CD4-positive, alpha-beta T cell (primary cell): ENCODE measurements at regions of chr10 and their contacts with region 1.

Region 1: DNA sequence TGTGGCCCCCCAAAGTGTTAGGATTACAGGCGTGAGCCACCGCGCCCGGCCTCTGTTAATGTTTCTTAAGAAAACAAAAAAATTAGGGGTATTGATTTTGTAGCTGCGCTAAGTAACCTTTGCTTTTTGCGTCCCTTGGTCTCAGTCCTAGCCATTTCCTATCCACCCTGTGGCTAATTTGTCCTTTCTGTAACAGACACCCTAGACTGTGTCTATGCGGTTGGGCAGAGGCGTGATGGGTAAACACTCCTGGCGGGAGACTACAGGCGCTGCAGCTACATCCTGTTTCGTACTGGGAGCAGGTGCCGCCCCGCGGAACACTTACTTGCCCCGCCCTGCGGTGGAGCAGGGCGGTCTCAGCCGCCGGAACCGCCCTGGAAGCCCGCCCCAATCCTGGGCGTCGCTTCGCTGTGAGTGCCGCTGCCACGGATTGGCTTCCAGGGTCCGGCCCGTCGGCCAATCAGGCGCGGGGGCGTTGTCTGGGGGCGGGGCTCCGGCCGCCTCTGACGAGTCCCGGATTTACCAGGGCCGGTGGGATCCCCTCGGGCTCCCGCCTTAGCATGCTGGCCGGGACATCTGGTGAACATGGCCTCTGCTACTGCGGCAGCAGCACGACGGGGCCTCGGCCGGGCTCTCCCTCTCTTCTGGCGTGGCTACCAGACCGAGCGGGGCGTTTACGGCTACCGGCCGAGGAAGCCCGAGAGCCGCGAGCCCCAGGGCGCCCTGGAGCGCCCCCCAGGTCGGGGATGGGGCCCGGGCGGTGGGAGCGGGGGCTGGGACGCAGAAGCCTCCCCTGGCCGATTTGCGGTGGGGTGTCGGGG is at the start of gene DHTKD1:
- DNase-seq: peak; percentile 95 to 99 (median 98)
- ATAC-seq: peak; percentile 98
- H3K4me3 ChIP-seq: peak within 1 kb of the TSS; percentile 85
- H3K4me3 Mint-ChIP-seq: peak within 1 kb of the TSS; percentile 91
- H3K27ac ChIP-seq: peak within 1 kb of the TSS; percentile 73 to 78
- H3K27ac Mint-ChIP-seq: peak within 1 kb of the TSS; percentile 95
- H3K4me1 ChIP-seq: peaks cover 15% of the 10 kb centered on the region
- H3K4me1 Mint-ChIP-seq: peaks cover 16% of the 10 kb centered on the region
- H3K27me3 ChIP-seq: no peaks in the 10 kb centered on the region
- H3K27me3 Mint-ChIP-seq: no peaks in the 10 kb centered on the region
- CTCF ChIP-seq: peak; percentile 27
- total RNA-seq, gene DHTKD1: 5.1 to 5.3 TPM

Region 2: DNA sequence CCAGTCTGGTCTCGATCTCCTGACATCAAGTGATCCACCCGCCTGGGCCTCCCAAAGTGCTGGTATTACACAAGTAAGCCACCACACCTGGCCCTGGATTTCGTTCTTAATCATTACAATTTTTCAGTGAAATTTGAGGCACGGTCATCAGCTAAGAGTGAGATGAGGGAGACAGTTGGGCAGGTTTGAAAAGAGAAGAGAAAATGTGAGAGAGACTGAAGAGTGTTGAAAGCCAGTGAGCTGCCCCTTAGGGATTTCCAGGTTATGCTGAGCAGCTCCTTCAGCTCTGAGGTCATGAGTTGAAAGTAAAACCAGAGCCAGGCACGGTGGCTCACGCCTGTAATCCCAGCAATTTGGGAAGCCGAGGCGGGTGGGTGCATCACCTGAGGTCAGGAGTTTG is 20.1 kb before region 1 on chr10:
- CTCF ChIA-PET with region 1: interaction called, 4 read pairs
- POLR2A ChIA-PET with region 1: interaction called, 55 read pairs
- intact Hi-C with region 1: loop called (anchors 1 kb)
- DNase-seq: no peak
- ATAC-seq: no peak
- H3K4me3 ChIP-seq: no peak overlapping the region
- H3K4me3 Mint-ChIP-seq: no peak overlapping the region
- H3K27ac ChIP-seq: no peak overlapping the region
- H3K27ac Mint-ChIP-seq: no peak overlapping the region
- H3K4me1 ChIP-seq: peaks cover 5% of the 10 kb centered on the region
- H3K4me1 Mint-ChIP-seq: peaks cover under 1% of the 10 kb centered on the region
- H3K27me3 ChIP-seq: no peaks in the 10 kb centered on the region
- H3K27me3 Mint-ChIP-seq: no peaks in the 10 kb centered on the region
- CTCF ChIP-seq: no peak

Region 3: GRCh38 chr10:12129222-12130111 is 60.8 kb after region 1 on chr10 and contains the start of gene SEC61A2:
- CTCF ChIA-PET with region 1: interaction called, 10 read pairs
- POLR2A ChIA-PET with region 1: interaction called, 3 read pairs
- intact Hi-C with region 1: loop called (anchors 1 to 10 kb)
- DNase-seq: peak; percentile 91 to 99 (median 98)
- ATAC-seq: peak; percentile 88
- H3K4me3 ChIP-seq: peak within 1 kb of the TSS; percentile 79
- H3K4me3 Mint-ChIP-seq: peak within 1 kb of the TSS; percentile 96
- H3K27ac ChIP-seq: peak within 1 kb of the TSS; percentile 76 to 79
- H3K27ac Mint-ChIP-seq: peak within 1 kb of the TSS; percentile 83
- H3K4me1 ChIP-seq: peaks cover 21% of the 10 kb centered on the region
- H3K4me1 Mint-ChIP-seq: peaks cover 25% of the 10 kb centered on the region
- H3K27me3 ChIP-seq: no peaks in the 10 kb centered on the region
- H3K27me3 Mint-ChIP-seq: no peaks in the 10 kb centered on the region
- CTCF ChIP-seq: no peak
- total RNA-seq, gene SEC61A2: 9.9 to 10.8 TPM